MCF 10A (cell line): ENCODE measurements at regions of chr6 and their contacts with region 1.

Region 1: GRCh38 chr6:26175428-26176181 is 88.4 kb downstream of the HFE start:
- DNase-seq: peak; percentile 82
- H3K4me3 Mint-ChIP-seq: peak overlapping the region; percentile 23
- H3K27ac Mint-ChIP-seq: peak overlapping the region; percentile 70
- H3K4me1 Mint-ChIP-seq: peaks cover 28% of the 10 kb centered on the region
- H3K27me3 Mint-ChIP-seq: no peaks in the 10 kb centered on the region
- CTCF ChIP-seq: peak; percentile 70

Region 2: DNA sequence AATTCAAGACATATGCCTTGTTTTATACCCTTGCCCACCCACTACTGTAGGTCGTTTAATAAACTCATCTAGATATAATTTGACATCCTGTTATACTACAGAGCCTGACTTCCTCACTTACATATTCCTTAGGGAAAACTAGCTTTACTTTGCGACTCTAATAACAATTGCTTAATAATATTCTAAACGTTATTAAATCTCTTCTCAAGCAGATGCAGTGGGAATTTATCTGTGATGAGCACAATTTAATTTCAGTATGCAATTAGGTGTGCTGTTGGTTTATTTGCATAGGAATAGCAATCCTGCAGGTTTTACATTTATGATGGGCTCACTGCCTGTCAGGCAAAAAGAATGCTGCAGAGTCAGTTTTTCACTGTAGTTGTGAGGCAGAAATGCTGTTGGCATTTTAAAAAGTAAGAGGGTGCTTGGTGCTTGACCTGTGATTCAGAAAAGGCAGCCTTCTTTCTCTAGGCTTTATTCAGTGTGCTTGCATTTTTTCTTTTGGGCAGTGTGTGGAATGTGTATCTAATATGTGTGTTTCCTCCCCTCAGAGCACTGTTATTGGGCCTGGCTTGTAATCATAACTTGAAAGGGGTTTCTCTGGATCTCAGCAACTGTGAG is 675.9 kb before region 1 on chr6:
- CTCF ChIA-PET with region 1: no interaction called
- POLR2A ChIA-PET with region 1: no interaction called
- intact Hi-C with region 1: no loop called
- DNase-seq: no peak
- H3K4me3 Mint-ChIP-seq: no peak overlapping the region
- H3K27ac Mint-ChIP-seq: no peak overlapping the region
- H3K4me1 Mint-ChIP-seq: no peaks in the 10 kb centered on the region
- H3K27me3 Mint-ChIP-seq: no peaks in the 10 kb centered on the region
- CTCF ChIP-seq: no peak

Region 3: GRCh38 chr6:25794784-25795183 is 380.8 kb before region 1 on chr6:
- CTCF ChIA-PET with region 1: no interaction called
- POLR2A ChIA-PET with region 1: no interaction called
- intact Hi-C with region 1: no loop called
- DNase-seq: no peak
- H3K4me3 Mint-ChIP-seq: no peak overlapping the region
- H3K27ac Mint-ChIP-seq: no peak overlapping the region
- H3K4me1 Mint-ChIP-seq: no peaks in the 10 kb centered on the region
- H3K27me3 Mint-ChIP-seq: peaks cover 44% of the 10 kb centered on the region
- CTCF ChIP-seq: no peak

Region 4: GRCh38 chr6:26054857-26055669 is 120.5 kb before region 1 on chr6:
- CTCF ChIA-PET with region 1: no interaction called
- POLR2A ChIA-PET with region 1: interaction called, 15 read pairs
- intact Hi-C with region 1: no loop called
- DNase-seq: peak; percentile 96
- H3K4me3 Mint-ChIP-seq: peak overlapping the region; percentile 74
- H3K27ac Mint-ChIP-seq: peak overlapping the region; percentile 92
- H3K4me1 Mint-ChIP-seq: no peaks in the 10 kb centered on the region
- H3K27me3 Mint-ChIP-seq: no peaks in the 10 kb centered on the region
- CTCF ChIP-seq: no peak

Region 5: GRCh38 chr6:26249957-26250697 is 74.5 kb after region 1 on chr6:
- CTCF ChIA-PET with region 1: no interaction called
- POLR2A ChIA-PET with region 1: interaction called, 5 read pairs
- intact Hi-C with region 1: loop called (anchors 2 kb)
- DNase-seq: peak; percentile 87
- H3K4me3 Mint-ChIP-seq: peak overlapping the region; percentile 94
- H3K27ac Mint-ChIP-seq: peak overlapping the region; percentile 63
- H3K4me1 Mint-ChIP-seq: peaks cover 7% of the 10 kb centered on the region
- H3K27me3 Mint-ChIP-seq: no peaks in the 10 kb centered on the region
- CTCF ChIP-seq: peak; percentile 42

Region 6: GRCh38 chr6:26596579-26597388 is 421.2 kb after region 1 on chr6 and contains the start of gene ABT1:
- CTCF ChIA-PET with region 1: no interaction called
- POLR2A ChIA-PET with region 1: no interaction called
- intact Hi-C with region 1: loop called (anchors 1 kb)
- DNase-seq: peak; percentile 99
- H3K4me3 Mint-ChIP-seq: no peak within 1 kb of the TSS
- H3K27ac Mint-ChIP-seq: no peak within 1 kb of the TSS
- H3K4me1 Mint-ChIP-seq: peaks cover 6% of the 10 kb centered on the region
- H3K27me3 Mint-ChIP-seq: no peaks in the 10 kb centered on the region
- CTCF ChIP-seq: no peak
- total RNA-seq, gene ABT1: 11.9 and 12.9 TPM in 2 replicates